Activated naive CD4-positive, alpha-beta T cell treated with anti-CD3 and anti-CD28 coated beads for 36 hours (primary cell): ENCODE measurements at regions of chrX and their contacts with region 1.

Region 1: DNA sequence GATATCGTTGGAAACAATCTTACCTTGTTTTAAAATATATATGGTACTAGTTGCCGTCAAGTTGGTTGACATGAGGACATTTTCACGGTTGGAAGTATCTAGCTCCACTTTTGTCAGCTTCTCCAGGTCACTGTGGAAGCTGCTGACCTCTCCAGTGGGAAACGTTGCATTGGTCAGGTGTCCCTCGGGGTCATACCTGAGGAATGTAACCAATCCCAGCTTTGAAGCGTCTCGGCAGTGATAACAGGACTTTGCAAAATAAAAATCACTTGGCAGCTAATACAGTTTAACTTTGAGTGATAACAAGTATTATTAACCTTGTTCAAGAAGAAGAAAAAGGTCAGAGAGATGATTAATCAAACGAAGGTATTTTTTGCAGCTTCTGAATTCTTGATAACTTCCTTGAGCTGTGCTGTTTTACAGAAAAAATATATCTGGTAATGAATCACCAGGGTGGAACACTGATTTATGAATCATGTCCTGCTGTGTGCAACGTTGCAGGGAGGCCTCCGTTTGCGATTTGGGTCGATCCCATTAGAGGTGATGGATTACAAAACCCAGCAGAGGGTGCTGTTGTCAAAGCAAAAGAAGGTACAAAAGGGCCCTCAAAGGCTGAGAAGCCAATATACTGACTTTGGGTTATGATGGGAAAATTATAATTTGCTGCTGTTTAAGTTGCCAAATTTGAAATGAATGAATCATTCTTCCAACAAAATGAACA is 60.1 kb downstream of the SH2D1A start:
- DNase-seq: peak; percentile 83
- H3K4me3 Mint-ChIP-seq: no peak overlapping the region
- H3K27ac Mint-ChIP-seq: no peak overlapping the region
- H3K4me1 Mint-ChIP-seq: peaks cover 17% of the 10 kb centered on the region
- H3K27me3 Mint-ChIP-seq: no peaks in the 10 kb centered on the region

Region 2: GRCh38 chrX:123454712-123455431 is 951.6 kb before region 1 on chrX:
- CTCF ChIA-PET with region 1: no interaction called
- intact Hi-C with region 1: no loop called
- DNase-seq: no peak
- H3K4me3 Mint-ChIP-seq: no peak overlapping the region
- H3K27ac Mint-ChIP-seq: no peak overlapping the region
- H3K4me1 Mint-ChIP-seq: no peaks in the 10 kb centered on the region
- H3K27me3 Mint-ChIP-seq: no peaks in the 10 kb centered on the region

Region 3: GRCh38 chrX:123685232-123685631 is 721.2 kb before region 1 on chrX:
- CTCF ChIA-PET with region 1: no interaction called
- intact Hi-C with region 1: no loop called
- DNase-seq: no peak
- H3K4me3 Mint-ChIP-seq: no peak overlapping the region
- H3K27ac Mint-ChIP-seq: no peak overlapping the region
- H3K4me1 Mint-ChIP-seq: peaks cover 3% of the 10 kb centered on the region
- H3K27me3 Mint-ChIP-seq: no peaks in the 10 kb centered on the region

Region 4: DNA sequence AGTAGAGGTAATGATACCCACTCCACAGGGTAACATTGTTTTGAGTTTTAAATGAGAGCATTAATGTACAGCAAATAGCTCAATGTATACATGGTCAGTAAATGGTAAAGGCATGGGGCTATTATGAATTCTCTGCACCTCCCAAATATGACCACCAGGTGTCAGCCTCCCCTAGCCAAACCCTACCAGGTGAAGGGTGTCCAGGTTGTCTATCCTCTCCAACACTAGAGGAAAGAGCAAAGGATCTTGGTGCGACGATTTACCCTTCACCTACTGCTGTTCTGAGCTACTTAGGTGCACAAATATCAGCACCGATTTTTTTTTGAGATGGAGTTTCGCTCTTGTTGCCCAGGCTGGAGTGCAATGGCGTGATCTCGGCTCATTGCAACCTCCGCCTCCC is 573.1 kb before region 1 on chrX:
- CTCF ChIA-PET with region 1: no interaction called
- intact Hi-C with region 1: loop called (anchors 1 kb)
- DNase-seq: peak; percentile 71
- H3K4me3 Mint-ChIP-seq: no peak overlapping the region
- H3K27ac Mint-ChIP-seq: no peak overlapping the region
- H3K4me1 Mint-ChIP-seq: peaks cover 8% of the 10 kb centered on the region
- H3K27me3 Mint-ChIP-seq: peaks cover 7% of the 10 kb centered on the region

Region 5: DNA sequence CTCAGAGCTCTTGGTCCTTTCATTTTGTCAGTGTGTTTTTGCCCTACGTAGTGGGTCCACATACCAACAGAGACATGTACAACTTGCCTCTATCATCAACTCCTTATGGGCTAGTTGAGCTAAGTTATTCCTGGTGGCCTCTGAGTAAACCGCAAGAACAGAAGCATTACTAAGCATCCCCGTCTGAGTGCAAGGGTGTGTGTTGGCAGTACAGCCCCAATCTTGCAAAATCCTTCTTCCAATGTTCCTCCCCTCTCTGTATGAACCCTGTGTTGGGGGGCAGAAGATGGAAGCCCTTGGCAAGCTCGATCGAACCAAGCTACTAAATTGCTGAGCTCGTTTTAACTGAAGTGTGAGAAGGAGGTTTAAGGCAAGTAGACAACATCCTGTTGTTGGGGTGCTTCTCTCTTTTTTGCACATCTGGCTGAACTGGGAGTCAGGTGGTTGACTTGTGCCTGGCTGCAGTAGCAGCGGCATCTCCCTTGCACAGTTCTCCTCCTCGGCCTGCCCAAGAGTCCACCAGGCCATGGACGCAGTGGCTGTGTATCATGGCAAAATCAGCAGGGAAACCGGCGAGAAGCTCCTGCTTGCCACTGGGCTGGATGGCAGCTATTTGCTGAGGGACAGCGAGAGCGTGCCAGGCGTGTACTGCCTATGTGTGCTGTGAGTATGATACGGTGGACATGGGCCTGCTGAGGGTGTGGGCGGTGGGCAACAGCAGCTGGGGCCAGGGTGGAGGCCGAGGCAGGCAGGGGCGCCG is 60.2 kb before region 1 on chrX and contains the start of gene SH2D1A:
- CTCF ChIA-PET with region 1: no interaction called
- intact Hi-C with region 1: no loop called
- DNase-seq: peak; percentile 29
- H3K4me3 Mint-ChIP-seq: peak within 1 kb of the TSS; percentile 86
- H3K27ac Mint-ChIP-seq: peak within 1 kb of the TSS; percentile 95
- H3K4me1 Mint-ChIP-seq: peaks cover 45% of the 10 kb centered on the region
- H3K27me3 Mint-ChIP-seq: no peaks in the 10 kb centered on the region
- total RNA-seq, gene SH2D1A: 17.0 to 17.2 TPM

Region 6: GRCh38 chrX:124388562-124388961 is 17.9 kb before region 1 on chrX:
- CTCF ChIA-PET with region 1: interaction called, 10 read pairs
- intact Hi-C with region 1: loop called (anchors 1 kb)
- DNase-seq: peak; percentile 75
- H3K4me3 Mint-ChIP-seq: no peak overlapping the region
- H3K27ac Mint-ChIP-seq: no peak overlapping the region
- H3K4me1 Mint-ChIP-seq: peaks cover 13% of the 10 kb centered on the region
- H3K27me3 Mint-ChIP-seq: no peaks in the 10 kb centered on the region

Region 7: GRCh38 chrX:124726881-124727280 is 320.4 kb after region 1 on chrX:
- CTCF ChIA-PET with region 1: no interaction called
- intact Hi-C with region 1: loop called (anchors 5 kb)
- DNase-seq: no peak
- H3K4me3 Mint-ChIP-seq: no peak overlapping the region
- H3K27ac Mint-ChIP-seq: no peak overlapping the region
- H3K4me1 Mint-ChIP-seq: peaks cover 29% of the 10 kb centered on the region
- H3K27me3 Mint-ChIP-seq: no peaks in the 10 kb centered on the region

Region 8: GRCh38 chrX:125132285-125132684 is 725.8 kb after region 1 on chrX:
- CTCF ChIA-PET with region 1: no interaction called
- intact Hi-C with region 1: loop called (anchors 1 kb)
- DNase-seq: peak; percentile 4
- H3K4me3 Mint-ChIP-seq: no peak overlapping the region
- H3K27ac Mint-ChIP-seq: no peak overlapping the region
- H3K4me1 Mint-ChIP-seq: no peaks in the 10 kb centered on the region
- H3K27me3 Mint-ChIP-seq: peaks cover 2% of the 10 kb centered on the region

Region 9: DNA sequence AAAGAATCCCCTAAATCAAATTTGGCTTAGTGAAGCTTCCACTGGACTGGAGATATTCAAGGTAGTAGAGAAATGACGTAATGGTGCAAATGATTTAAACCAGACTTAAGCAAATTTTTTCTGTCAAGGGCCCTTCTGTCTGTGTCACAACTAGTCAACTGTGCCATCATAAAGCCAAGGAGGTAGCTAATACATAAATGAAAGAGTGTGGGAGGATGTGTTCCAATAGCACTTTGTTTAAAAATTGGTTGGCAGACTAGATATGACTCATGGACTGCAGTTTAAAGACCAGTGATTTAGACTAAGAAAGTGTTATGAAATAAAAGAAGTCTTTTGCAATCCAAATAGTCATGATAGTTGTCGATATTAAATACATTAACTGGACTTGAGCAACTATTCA is 888.9 kb after region 1 on chrX:
- CTCF ChIA-PET with region 1: no interaction called
- intact Hi-C with region 1: loop called (anchors 2 kb)
- DNase-seq: peak; percentile 8
- H3K4me3 Mint-ChIP-seq: no peak overlapping the region
- H3K27ac Mint-ChIP-seq: peak overlapping the region; percentile 51
- H3K4me1 Mint-ChIP-seq: peaks cover 22% of the 10 kb centered on the region
- H3K27me3 Mint-ChIP-seq: no peaks in the 10 kb centered on the region